Activated CD8-positive, alpha-beta T cell treated with anti-CD3 and anti-CD28 coated beads, Interleukin-2, amount 10 ng/mL, durations not matched to agents 7 days and 5 days (primary cell): ENCODE measurements at regions of chrX and their contacts with region 1.

Region 1: DNA sequence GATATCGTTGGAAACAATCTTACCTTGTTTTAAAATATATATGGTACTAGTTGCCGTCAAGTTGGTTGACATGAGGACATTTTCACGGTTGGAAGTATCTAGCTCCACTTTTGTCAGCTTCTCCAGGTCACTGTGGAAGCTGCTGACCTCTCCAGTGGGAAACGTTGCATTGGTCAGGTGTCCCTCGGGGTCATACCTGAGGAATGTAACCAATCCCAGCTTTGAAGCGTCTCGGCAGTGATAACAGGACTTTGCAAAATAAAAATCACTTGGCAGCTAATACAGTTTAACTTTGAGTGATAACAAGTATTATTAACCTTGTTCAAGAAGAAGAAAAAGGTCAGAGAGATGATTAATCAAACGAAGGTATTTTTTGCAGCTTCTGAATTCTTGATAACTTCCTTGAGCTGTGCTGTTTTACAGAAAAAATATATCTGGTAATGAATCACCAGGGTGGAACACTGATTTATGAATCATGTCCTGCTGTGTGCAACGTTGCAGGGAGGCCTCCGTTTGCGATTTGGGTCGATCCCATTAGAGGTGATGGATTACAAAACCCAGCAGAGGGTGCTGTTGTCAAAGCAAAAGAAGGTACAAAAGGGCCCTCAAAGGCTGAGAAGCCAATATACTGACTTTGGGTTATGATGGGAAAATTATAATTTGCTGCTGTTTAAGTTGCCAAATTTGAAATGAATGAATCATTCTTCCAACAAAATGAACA is 60.1 kb downstream of the SH2D1A start:
- DNase-seq: peak; percentile 67
- ATAC-seq: peak; percentile 67
- H3K4me3 Mint-ChIP-seq: no peak overlapping the region
- H3K27ac Mint-ChIP-seq: no peak overlapping the region
- H3K4me1 Mint-ChIP-seq: peaks cover 5% of the 10 kb centered on the region
- H3K27me3 Mint-ChIP-seq: no peaks in the 10 kb centered on the region

Region 2: DNA sequence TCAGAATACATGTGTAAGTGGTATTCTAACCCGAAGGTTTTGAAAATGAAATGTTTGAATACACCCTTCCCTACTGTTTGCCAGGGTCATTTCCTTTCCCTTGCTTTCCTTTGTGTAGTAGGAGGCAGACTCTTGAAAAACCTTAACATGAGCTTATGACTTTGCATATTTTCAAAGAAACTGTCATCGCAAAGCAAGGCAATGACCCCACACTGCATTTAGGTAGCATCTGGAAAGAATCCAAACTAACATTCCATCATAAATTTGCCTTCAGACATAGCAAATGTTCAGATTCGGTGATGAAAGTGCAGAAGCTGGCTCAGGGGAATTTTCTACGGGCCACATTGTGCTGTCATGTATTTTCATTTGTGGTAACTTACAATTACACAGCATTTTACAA is 27.8 kb before region 1 on chrX:
- CTCF ChIA-PET with region 1: no interaction called
- POLR2A ChIA-PET with region 1: no interaction called
- DNase-seq: no peak
- ATAC-seq: no peak
- H3K4me3 Mint-ChIP-seq: no peak overlapping the region
- H3K27ac Mint-ChIP-seq: no peak overlapping the region
- H3K4me1 Mint-ChIP-seq: peaks cover 18% of the 10 kb centered on the region
- H3K27me3 Mint-ChIP-seq: no peaks in the 10 kb centered on the region

Region 3: DNA sequence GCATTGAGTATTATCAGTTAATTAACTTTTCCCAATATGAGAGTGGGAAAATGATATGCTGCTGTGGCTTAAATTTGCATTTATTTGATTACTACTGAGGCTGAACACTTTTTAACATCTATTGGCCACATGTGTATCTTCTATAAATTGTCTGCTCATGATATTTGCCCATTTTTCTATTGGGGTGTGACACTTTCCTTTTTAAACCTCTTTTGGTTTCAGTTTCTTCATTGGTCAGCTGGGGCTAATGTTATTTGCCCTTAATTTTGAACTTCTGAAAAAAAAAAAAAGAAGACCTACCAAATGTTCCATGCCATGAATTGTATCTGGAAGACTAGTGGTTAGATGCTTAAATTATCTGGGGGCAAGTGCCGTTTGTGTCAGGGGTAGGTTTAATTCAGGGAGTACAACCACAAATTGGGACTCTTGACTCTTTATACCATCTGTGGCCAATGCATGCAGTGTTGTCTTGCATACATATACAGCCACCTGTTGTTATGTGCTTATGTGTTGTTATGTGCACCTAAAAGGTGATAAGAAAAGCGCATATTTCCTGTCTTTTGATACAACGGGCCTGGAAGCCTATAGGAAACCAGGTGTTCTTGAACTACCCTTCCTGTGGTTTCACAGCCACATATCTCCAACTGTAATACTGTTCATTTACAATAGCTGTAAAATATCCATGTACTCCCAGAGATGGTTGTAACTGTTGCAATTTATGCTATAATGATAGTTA is 11.1 kb before region 1 on chrX:
- CTCF ChIA-PET with region 1: interaction called, 11 read pairs
- POLR2A ChIA-PET with region 1: no interaction called
- DNase-seq: no peak
- ATAC-seq: peak; percentile 60
- H3K4me3 Mint-ChIP-seq: peak overlapping the region; percentile 65
- H3K27ac Mint-ChIP-seq: peak overlapping the region; percentile 67
- H3K4me1 Mint-ChIP-seq: peaks cover 24% of the 10 kb centered on the region
- H3K27me3 Mint-ChIP-seq: no peaks in the 10 kb centered on the region

Region 4: GRCh38 chrX:125132285-125132684 is 725.8 kb after region 1 on chrX:
- CTCF ChIA-PET with region 1: interaction called, 17 read pairs
- POLR2A ChIA-PET with region 1: no interaction called
- DNase-seq: no peak
- ATAC-seq: no peak
- H3K4me3 Mint-ChIP-seq: no peak overlapping the region
- H3K27ac Mint-ChIP-seq: no peak overlapping the region
- H3K4me1 Mint-ChIP-seq: no peaks in the 10 kb centered on the region
- H3K27me3 Mint-ChIP-seq: no peaks in the 10 kb centered on the region